ENCODE measurements at regions of chr1 and their contacts with region 1.

Region 1: DNA sequence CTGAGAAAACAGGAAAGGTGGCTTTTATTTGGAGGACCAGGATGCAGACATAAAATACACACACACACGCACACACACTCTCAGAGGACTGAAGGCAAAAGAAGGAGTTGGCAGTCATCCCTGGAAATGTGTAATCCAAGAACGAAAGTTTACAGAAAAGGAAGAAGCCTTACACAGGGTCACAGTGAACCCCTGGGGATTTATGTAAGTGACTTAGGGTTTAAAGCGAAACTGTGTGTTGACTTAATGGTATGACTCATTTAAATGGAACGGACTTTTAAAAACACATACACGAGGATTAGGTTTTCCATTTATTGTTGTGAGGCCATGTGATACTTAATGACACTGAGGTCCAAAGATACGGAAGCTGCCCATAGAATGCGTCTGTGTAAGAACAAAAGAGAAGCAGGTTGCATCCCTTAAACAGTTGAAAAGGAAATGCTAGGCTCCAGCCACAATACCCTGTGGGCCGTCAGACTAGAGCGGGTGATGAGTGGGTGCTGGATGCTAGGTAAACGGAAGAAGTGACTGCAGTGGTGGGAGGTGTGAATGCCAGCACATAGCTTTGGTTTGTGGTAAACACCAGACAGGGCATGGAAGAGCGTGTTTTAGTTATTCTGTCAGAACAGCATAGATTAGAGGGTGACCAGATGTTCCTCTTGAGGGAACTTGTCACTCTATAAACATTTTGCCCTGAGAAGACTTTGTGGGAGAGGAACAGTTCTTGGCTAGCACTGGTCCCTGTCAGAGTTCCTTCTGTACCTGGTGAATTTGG is 21.6 kb upstream of the BCL10 start:
- DNase-seq: peak; percentile 100
- H3K4me3 ChIP-seq: no peak overlapping the region
- H3K27ac ChIP-seq: peak overlapping the region; percentile 95
- H3K4me1 ChIP-seq: peaks cover 43% of the 10 kb centered on the region
- H3K27me3 ChIP-seq: no peaks in the 10 kb centered on the region
- CTCF ChIP-seq: no peak
- POLR2A ChIP-seq: peak; percentile 55

Region 2: DNA sequence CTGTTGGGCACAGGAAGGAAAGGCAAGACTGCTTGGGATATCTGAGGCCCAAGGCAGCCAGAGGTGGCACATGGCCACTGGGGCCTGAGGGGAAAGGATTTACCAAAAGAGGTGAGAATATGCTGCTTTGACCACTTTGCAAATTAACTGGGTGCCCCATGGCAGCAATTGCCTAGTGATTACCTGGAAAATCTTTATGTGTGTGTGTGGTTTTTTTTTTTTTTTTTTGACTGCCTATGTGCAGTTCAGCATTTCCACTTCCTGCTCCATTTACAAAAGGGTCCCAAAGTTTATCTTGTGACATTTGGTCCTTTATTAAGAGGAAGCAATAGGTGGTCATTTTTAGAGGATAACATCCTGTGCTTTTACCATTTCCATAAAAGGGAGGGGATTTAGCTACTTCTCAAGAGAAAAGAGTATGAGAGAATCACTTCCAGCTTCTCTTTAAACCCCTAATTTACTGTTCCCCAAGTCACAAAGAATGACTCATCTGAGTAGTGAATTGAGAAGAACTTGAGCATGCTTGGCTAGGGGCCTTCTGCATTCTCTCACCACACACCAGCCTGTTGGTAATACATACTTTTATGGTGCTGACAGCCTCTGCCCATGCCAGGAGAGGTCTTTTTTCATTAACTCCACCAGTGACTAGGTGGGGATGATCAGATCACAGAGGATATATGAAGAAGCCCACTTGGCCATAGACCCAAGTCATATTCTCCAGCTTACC is 149.4 kb before region 1 on chr1:
- CTCF ChIA-PET with region 1: no interaction called
- POLR2A ChIA-PET with region 1: no interaction called
- dilution Hi-C with region 1: no loop called
- intact Hi-C with region 1: no loop called
- DNase-seq: no peak
- H3K4me3 ChIP-seq: no peak overlapping the region
- H3K27ac ChIP-seq: no peak overlapping the region
- H3K4me1 ChIP-seq: no peaks in the 10 kb centered on the region
- H3K27me3 ChIP-seq: peaks cover 0 to 3% of the 10 kb centered on the region in 2 experiments
- CTCF ChIP-seq: no peak
- POLR2A ChIP-seq: no peak

Region 3: DNA sequence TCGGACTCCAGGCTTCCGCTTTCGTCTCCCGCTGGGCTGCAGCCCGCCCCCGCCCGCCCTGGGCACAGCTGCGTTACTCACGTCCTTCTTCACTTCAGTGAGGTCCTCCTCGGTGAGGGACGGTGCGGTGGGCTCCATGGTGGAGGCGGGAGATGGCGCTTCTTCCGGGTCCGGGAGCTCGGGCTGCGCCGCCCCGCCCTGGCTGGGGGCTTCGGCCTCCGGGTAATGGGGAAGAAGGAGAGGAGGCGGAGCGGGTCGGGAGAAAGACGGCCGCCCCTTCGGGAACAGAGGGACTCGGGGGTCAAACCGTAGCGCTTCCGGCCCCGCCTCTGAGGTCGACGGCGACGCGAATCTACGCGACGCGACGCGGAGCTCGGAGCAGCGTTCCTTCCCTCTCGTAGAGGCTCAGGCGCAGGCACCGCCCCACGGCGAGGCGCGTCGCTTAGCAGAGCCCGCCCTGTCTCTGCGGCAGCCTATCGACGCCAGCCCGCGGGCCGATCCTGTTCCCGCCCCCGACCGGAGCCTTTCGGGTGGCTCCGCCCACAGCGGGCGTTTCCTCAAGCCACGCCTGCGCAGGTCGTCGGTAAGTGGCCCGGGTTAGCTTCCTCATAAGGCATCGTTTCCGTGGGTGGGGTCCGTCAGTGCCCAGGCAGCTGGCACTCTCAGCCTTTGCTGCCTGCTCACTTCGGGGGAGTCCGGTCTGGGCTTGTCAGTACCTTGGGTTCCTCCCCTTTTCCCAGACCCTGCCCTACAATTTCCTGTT is 21.6 kb before region 1 on chr1 and contains the start of gene BCL10:
- CTCF ChIA-PET with region 1: interaction called, 39 read pairs
- POLR2A ChIA-PET with region 1: interaction called, 21 read pairs
- dilution Hi-C with region 1: no loop called
- intact Hi-C with region 1: loop called (anchors 1 kb)
- DNase-seq: peak; percentile 99
- H3K4me3 ChIP-seq: peak within 1 kb of the TSS; percentile 95 to 99 (median 98)
- H3K27ac ChIP-seq: peak within 1 kb of the TSS; percentile 100
- H3K4me1 ChIP-seq: peaks cover 56% of the 10 kb centered on the region
- H3K27me3 ChIP-seq: no peaks in the 10 kb centered on the region
- CTCF ChIP-seq: no peak
- POLR2A ChIP-seq: peak; percentile 64
- total RNA-seq, gene BCL10: 74.5 and 78.6 TPM in 2 replicates

Region 4: DNA sequence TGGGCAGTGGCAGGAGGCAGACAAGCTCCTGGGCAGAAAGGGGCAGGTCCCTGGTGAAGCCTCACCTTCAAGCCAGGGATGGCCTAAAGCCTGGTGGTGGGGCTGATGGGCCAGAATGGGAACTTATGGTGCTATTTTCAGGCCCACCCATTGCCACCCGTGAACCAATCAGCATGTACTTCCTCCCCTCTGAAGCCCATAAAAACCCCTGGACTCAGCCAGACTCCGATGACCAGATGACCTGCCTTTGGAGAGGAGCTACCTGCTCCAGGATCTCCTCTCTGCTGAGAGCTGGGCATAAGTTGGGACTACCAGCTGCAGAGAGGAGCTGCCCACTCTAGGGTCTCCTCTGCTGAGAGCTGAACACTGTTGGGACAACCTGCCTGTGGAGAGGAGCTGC is 13.8 kb before region 1 on chr1:
- CTCF ChIA-PET with region 1: interaction called, 39 read pairs
- POLR2A ChIA-PET with region 1: interaction called, 7 read pairs
- dilution Hi-C with region 1: no loop called
- intact Hi-C with region 1: no loop called
- DNase-seq: no peak
- H3K4me3 ChIP-seq: no peak overlapping the region
- H3K27ac ChIP-seq: no peak overlapping the region
- H3K4me1 ChIP-seq: peaks cover 9% of the 10 kb centered on the region
- H3K27me3 ChIP-seq: no peaks in the 10 kb centered on the region
- CTCF ChIP-seq: no peak
- POLR2A ChIP-seq: no peak

Region 5: DNA sequence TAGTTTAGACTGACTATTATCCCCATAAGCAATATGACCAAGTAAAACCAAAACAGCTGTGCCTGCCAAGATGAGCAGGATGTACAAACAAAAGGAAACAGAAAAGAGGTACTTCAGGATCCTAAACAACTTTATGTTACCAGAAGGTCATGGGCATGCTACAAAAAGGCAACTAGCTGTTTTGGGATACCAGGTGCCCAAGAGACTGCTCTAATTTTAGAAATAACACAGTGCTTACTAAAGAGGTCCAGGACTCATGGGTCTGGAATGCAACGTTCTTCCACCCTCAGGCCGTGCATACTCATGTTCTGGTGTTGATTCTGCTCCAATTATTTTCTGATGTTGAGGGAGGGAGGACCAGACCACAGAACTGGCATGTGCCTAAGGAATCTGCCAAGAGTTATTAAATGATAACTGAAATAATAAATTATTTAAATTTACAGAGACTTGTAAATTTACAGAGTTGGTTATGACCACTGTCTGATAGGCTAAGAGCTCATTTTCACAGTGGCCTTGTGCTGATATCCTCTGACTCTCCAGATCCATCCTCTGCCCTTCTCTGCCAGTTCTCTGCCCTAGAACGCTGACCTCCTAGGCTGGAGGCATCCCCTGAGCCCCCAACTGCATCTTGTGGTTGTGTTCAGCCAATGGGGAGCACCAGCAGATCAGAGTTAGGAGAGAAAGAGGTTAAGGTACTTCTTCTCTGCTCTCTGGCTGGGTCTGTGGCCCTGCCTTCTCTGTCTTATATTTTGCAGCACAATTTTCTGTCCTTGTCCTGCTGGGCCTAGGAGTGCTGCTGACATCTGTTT is 16.1 kb after region 1 on chr1:
- CTCF ChIA-PET with region 1: interaction called, 13 read pairs
- POLR2A ChIA-PET with region 1: no interaction called
- dilution Hi-C with region 1: no loop called
- intact Hi-C with region 1: loop called (anchors 1 kb)
- DNase-seq: peak; percentile 87
- H3K4me3 ChIP-seq: no peak overlapping the region
- H3K27ac ChIP-seq: peak overlapping the region; percentile 93
- H3K4me1 ChIP-seq: peaks cover 63% of the 10 kb centered on the region
- H3K27me3 ChIP-seq: no peaks in the 10 kb centered on the region
- CTCF ChIP-seq: no peak
- POLR2A ChIP-seq: peak; percentile 59

Region 6: GRCh38 chr1:85576642-85577418 is 278.8 kb after region 1 on chr1:
- CTCF ChIA-PET with region 1: interaction called, 4 read pairs
- POLR2A ChIA-PET with region 1: interaction called, 11 read pairs
- dilution Hi-C with region 1: no loop called
- intact Hi-C with region 1: loop called (anchors 1 kb)
- DNase-seq: peak; percentile 87
- H3K4me3 ChIP-seq: peak overlapping the region; percentile 67 to 93 (median 80)
- H3K27ac ChIP-seq: peak overlapping the region; percentile 98
- H3K4me1 ChIP-seq: peaks cover 55% of the 10 kb centered on the region
- H3K27me3 ChIP-seq: no peaks in the 10 kb centered on the region
- CTCF ChIP-seq: peak; percentile 69 to 83
- POLR2A ChIP-seq: peak; percentile 17

Region 7: GRCh38 chr1:85707990-85708828 is 410.2 kb after region 1 on chr1 and contains the start of gene ZNHIT6:
- CTCF ChIA-PET with region 1: no interaction called
- POLR2A ChIA-PET with region 1: no interaction called
- dilution Hi-C with region 1: no loop called
- intact Hi-C with region 1: loop called (anchors 5 kb)
- DNase-seq: peak; percentile 95
- H3K4me3 ChIP-seq: peak within 1 kb of the TSS; percentile 43 to 82 (median 69)
- H3K27ac ChIP-seq: peak within 1 kb of the TSS; percentile 41
- H3K4me1 ChIP-seq: peaks cover 13% of the 10 kb centered on the region
- H3K27me3 ChIP-seq: no peaks in the 10 kb centered on the region
- CTCF ChIP-seq: peak; percentile 17 to 42
- POLR2A ChIP-seq: peak; percentile 60
- total RNA-seq, gene ZNHIT6: 18.8 and 21.4 TPM in 2 replicates